ENCODE measurements at regions of chr11 and their contacts with region 1.

Region 1: DNA sequence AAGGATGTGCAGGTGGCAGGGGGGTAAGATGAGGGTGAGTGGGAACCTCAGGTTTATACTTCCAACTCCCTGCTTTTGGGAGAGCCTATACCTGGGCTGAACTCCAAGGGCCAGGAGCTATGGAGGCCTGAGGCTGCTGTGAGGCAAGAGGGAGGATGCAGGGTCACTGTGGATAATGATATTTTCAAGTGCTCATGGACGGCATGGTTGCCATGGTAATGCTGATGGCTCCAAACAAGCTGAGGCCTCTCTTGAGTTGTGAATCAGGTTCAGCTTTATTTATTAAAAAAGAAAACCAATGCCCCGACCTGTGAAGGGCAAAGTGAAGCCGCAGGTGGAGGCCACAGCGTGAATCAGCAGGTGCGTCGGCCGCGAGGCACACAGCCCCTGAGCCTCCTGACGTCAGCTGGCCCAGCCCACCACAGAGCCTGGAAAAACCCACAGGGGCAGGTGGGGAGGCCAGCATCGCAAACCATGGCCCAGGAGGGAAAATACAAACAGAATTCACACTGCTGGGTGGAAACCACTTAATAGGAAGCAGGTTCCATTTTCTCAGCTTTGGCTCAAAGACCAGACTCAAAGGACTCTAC is 17.4 kb upstream of the CREB3L1 start:
- DNase-seq: no peak
- CTCF ChIP-seq: no peak

Region 2: GRCh38 chr11:45405916-45406670 is 854.0 kb before region 1 on chr11:
- CTCF ChIA-PET with region 1: no interaction called
- POLR2A ChIA-PET with region 1: no interaction called
- DNase-seq: no peak
- CTCF ChIP-seq: peak; percentile 33

Region 3: DNA sequence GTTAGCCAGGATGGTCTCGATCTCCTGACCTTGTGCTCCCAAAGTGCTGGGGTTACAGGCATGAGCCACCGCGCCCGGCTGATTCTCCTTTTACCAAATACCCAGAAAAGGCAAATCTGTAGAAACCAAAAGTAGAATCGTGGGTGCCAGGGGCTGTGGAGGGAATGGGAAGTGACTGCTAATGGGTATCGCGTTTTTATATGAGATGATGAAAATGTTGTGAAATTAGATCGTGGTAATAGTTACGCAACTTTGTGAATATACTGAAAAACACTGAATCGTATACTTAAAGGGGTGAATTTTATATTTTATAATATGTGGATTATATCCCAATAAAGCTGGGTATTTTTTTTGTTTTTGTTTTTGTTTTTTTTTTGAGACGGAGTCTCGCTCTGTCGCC is 30.8 kb before region 1 on chr11:
- CTCF ChIA-PET with region 1: no interaction called
- POLR2A ChIA-PET with region 1: no interaction called
- DNase-seq: no peak
- CTCF ChIP-seq: no peak

Region 4: DNA sequence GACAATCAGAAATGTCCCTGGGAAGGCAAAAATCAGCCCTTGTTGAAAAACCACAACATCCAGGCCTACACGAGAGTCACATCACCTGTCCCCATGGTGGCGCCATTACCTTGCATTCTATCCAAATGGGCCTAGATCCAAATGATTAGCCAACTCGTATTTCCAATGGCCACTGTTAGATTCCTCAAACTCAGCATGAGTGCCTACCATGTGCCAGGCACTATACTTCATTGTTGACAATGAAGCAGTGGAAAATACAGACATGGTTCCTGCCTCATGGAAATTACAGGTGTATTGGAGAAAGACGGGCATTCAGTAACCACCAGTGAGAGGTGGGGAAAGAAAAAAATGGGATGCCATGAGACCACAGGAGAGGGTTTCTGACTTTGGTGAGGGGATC is 12.4 kb before region 1 on chr11:
- CTCF ChIA-PET with region 1: interaction called, 13 read pairs
- POLR2A ChIA-PET with region 1: no interaction called
- DNase-seq: peak; percentile 61
- CTCF ChIP-seq: peak; percentile 51

Region 5: DNA sequence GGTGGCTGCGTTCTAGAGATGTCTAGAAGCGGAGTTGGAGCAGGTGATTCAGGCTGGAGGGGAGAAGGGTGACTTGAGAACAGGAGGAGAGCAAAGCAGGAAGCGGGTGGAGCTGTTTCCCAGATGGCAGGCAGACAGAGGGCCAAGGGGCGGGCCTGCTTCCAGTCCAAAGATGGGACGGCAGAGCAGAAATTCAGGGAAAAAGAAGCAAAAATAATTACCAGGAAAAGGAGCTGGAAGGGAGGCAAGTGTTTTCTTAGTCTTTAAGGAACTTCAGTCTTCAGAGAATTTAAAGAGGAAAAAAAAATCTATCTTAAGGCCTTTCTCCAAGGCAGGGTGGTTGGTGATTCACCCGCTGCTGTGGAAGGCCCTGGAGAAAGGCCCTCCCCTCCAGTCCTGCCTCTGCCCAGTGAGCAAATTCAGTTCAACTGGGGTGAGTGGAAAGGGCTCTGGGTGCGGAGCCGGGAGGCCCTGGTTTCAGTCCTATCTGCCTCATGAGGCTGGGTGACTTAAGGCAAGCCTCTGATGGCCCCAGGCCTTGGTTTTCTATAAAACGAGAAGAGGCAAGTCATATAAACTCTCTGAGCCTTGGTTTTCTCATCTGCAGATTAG is 12.9 kb after region 1 on chr11:
- CTCF ChIA-PET with region 1: interaction called, 13 read pairs
- POLR2A ChIA-PET with region 1: no interaction called
- DNase-seq: no peak
- CTCF ChIP-seq: no peak

Region 6: DNA sequence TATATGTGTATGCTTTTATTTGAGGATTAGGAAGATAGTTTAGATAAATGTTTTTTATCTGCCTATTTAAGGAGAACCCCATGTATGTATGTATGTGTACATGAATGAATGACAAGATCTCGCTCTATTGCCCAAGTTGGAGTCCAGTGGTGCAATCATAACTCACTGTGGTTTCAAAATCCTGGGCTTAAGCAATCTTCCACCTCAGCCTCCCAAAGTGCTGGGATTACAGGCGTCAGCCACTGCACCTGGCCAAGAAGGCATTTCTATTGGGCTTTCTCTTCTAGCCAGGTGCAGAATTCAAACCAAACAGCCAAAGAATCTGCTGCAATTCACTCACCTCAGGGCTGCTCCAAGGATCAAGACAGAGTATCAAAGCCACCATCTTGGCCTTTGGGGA is 61.7 kb after region 1 on chr11:
- CTCF ChIA-PET with region 1: no interaction called
- POLR2A ChIA-PET with region 1: no interaction called
- DNase-seq: no peak
- CTCF ChIP-seq: no peak